Gastrocnemius medialis (tissue), 4 donors: ENCODE measurements at regions of chr10 and their contacts with region 1.

Region 1: DNA sequence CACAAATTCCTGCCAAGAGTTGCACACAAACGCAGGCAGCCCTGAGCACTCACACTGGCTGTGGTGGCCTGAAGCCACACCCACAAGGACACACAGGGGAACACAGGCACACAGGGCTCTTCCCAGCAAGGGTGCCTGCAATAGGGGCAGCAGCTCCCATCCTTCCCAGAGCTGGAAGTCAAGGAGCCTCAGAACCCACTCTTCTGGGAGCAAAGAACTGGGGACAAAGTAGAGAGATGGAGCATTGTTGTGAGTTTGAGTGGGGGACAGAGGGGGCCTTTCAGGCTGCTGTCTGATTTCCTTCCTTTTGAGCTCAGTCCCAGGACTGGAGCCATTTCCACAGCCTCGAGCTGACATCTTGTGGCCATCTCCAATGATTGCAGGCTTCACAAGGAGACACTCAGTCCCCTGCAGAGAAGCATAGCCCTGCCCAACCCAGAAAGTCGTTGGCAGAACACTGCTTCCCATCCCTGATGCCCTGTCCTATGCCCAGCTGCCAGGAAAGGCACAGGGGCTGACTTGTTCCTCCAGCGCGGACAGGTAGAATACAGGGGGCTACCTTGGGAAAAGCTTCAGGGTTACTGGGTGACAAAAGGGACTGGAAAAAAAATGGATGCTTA is 34.4 kb upstream of the SLF2 start:
- DNase-seq: no peak
- ATAC-seq: peak; percentile 62 to 70
- H3K4me3 ChIP-seq: no peak overlapping the region
- H3K27ac ChIP-seq: no peak overlapping the region
- H3K4me1 ChIP-seq: no peaks in the 10 kb centered on the region
- H3K27me3 ChIP-seq: peaks cover 0 to 14% (median 0%) of the 10 kb centered on the region in 3 donors
- CTCF ChIP-seq: peak in 3 of 5 experiments; percentile 20 to 42 (median 40)
- POLR2A ChIP-seq: no peak

Region 2: GRCh38 chr10:100561005-100561404 is 317.4 kb before region 1 on chr10:
- in situ Hi-C with region 1: no loop called
- intact Hi-C with region 1: loop called (anchors 2 kb)
- DNase-seq: no peak
- ATAC-seq: no peak
- H3K4me3 ChIP-seq: no peak overlapping the region
- H3K27ac ChIP-seq: no peak overlapping the region
- H3K4me1 ChIP-seq: peaks cover 10 to 14% of the 10 kb centered on the region in 2 donors
- H3K27me3 ChIP-seq: peaks cover 31 to 44% (median 39%) of the 10 kb centered on the region in 3 donors
- CTCF ChIP-seq: no peak
- POLR2A ChIP-seq: no peak

Region 3: GRCh38 chr10:100670828-100671479 is 207.4 kb before region 1 on chr10:
- in situ Hi-C with region 1: no loop called
- intact Hi-C with region 1: loop called (anchors 10 kb)
- DNase-seq: no peak
- ATAC-seq: no peak
- H3K4me3 ChIP-seq: no peak overlapping the region
- H3K27ac ChIP-seq: no peak overlapping the region
- H3K4me1 ChIP-seq: no peaks in the 10 kb centered on the region
- H3K27me3 ChIP-seq: peaks cover 69 to 77% (median 73%) of the 10 kb centered on the region in 3 donors
- CTCF ChIP-seq: peak in 4 of 5 experiments; percentile 34 to 69 (median 60)
- POLR2A ChIP-seq: no peak

Region 4: GRCh38 chr10:100748231-100749058 is 130.0 kb before region 1 on chr10:
- in situ Hi-C with region 1: no loop called
- intact Hi-C with region 1: no loop called
- DNase-seq: no peak
- ATAC-seq: no peak
- H3K4me3 ChIP-seq: peak overlapping the region; percentile 24 to 45 (median 31)
- H3K27ac ChIP-seq: no peak overlapping the region
- H3K4me1 ChIP-seq: peaks cover 37 to 48% of the 10 kb centered on the region in 2 donors
- H3K27me3 ChIP-seq: peaks cover 90 to 97% (median 94%) of the 10 kb centered on the region in 3 donors
- CTCF ChIP-seq: no peak
- POLR2A ChIP-seq: no peak

Region 5: DNA sequence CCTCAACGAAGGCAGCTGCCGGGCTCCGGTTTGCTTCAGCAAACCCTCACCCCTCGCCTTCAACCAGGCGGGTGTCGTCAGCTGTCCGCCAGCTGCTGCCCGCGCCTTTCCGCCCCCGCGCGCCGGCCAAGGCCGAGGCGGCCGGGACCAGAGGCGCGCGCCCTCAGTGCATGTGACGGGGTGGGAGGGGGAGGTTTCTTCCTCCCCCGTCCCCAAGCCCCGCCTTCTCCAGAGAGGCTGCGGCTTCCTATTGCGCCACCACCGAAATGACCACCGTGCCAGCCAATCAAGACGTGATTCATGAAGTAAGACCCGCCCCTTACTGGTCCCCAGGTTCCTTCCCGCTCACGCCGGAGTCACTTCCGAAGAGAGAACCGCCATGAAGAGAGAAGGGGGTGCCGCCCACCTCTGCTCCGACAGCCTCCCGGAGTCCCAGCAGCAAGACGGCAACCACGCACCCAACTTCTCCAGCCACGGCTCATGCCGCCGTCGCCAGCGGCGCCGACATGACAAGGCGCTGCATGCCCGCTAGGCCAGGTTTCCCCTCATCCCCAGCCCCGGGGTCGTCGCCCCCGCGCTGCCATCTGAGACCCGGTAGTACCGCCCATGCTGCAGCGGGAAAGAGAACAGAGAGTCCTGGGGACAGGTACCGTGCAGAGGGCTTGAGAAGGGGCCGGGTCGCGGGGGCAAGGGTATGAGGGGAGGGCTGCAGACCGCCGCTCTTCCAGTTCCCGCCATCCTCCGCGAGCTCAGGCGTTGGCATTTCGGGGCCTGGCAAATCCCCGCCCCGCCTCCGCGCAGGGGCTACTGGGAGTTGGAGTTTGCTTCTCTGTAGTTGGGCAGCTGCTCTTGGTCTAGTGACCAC is 34.4 kb after region 1 on chr10 and contains the start of gene SLF2:
- in situ Hi-C with region 1: no loop called
- intact Hi-C with region 1: no loop called
- DNase-seq: peak; percentile 98 to 99
- ATAC-seq: peak; percentile 98 to 99
- H3K4me3 ChIP-seq: peak within 1 kb of the TSS; percentile 99 to 100 (median 100)
- H3K27ac ChIP-seq: peak within 1 kb of the TSS; percentile 96 to 99 (median 97)
- H3K4me1 ChIP-seq: peaks cover 31 to 33% of the 10 kb centered on the region in 2 donors
- H3K27me3 ChIP-seq: no peaks in the 10 kb centered on the region
- CTCF ChIP-seq: no peak
- POLR2A ChIP-seq: peak; percentile 92 to 93
- total RNA-seq, gene SLF2: 9.2 to 23.0 (median 20.1) TPM